Heart right ventricle (tissue), 16 donors: ENCODE measurements at regions of chr22 and their contacts with region 1.

Region 1: DNA sequence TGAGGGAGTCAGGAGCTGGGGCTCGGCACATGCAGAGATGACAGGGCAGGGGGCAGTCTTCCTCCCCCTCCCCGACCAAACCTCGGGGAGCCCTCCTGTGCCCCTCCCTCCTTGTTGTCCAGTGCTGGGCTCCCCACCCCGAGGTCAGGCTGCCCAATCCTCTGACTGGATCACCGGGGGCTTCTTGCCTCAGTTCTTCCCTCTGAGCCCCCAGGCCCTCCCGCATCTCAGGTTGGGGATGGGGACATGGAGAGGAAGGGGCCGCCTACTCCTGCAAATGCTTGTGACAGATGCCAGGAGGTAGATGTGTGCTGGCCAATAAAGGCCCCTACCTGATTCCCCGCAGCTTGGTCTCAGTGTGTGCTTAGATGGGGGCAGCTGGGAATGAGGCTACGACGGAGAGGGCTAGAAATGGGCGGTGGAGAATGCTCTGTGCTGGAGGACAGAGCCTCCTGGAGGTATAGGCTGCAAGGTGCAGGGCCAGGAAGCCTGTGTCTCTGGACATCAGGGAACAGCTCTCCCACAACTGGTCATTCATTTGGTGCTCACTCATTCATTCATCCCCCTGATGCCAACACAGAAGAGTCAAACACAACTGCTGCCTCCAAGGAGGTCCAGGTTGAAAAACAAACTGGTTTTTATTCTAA is 8.4 kb downstream of the RHBDD3 start:
- DNase-seq: no peak
- ATAC-seq: no peak
- H3K4me3 ChIP-seq: no peak overlapping the region
- H3K27ac ChIP-seq: no peak overlapping the region
- H3K4me1 ChIP-seq: no peaks in the 10 kb centered on the region
- H3K27me3 ChIP-seq: no peaks in the 10 kb centered on the region
- CTCF ChIP-seq: no peak

Region 2: GRCh38 chr22:28728621-28729313 is 530.6 kb before region 1 on chr22:
- intact Hi-C with region 1: loop called in 1 of 10 experiments (anchors 10 kb)
- DNase-seq: no peak
- ATAC-seq: no peak
- H3K4me3 ChIP-seq: no peak overlapping the region
- H3K27ac ChIP-seq: no peak overlapping the region
- H3K4me1 ChIP-seq: no peaks in the 10 kb centered on the region
- H3K27me3 ChIP-seq: no peaks in the 10 kb centered on the region
- CTCF ChIP-seq: no peak

Region 3: GRCh38 chr22:29055192-29055830 is 204.1 kb before region 1 on chr22:
- intact Hi-C with region 1: loop called in 1 of 10 experiments (anchors 10 kb)
- DNase-seq: no peak
- ATAC-seq: no peak
- H3K4me3 ChIP-seq: no peak overlapping the region
- H3K27ac ChIP-seq: no peak overlapping the region
- H3K4me1 ChIP-seq: no peaks in the 10 kb centered on the region
- H3K27me3 ChIP-seq: no peaks in the 10 kb centered on the region
- CTCF ChIP-seq: no peak

Region 4: DNA sequence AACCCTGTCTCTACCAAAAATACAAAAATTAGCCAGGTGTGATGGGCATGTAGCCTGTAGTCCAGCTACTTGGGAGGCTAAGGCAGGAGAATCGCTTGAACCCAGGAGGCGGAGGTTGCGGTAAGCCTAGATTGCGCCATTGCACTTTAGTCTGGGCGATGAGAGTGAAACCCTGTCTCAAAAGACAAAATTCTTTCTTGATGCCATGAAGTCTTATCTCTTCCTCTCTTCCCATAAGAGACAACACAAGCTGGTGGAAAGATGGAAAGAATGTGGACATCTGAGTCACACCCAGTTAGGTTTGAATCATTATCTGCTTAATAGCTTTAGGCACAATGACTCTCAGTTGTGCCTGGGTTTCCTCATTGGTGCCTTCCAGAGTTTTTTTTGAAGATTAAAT is 151.3 kb before region 1 on chr22:
- intact Hi-C with region 1: loop called in 1 of 10 experiments (anchors 10 kb)
- DNase-seq: no peak
- ATAC-seq: no peak
- H3K4me3 ChIP-seq: no peak overlapping the region
- H3K27ac ChIP-seq: no peak overlapping the region
- H3K4me1 ChIP-seq: peaks cover 0 to 10% (median 0%) of the 10 kb centered on the region in 9 donors
- H3K27me3 ChIP-seq: no peaks in the 10 kb centered on the region
- CTCF ChIP-seq: no peak

Region 5: GRCh38 chr22:29156524-29156923 is 102.9 kb before region 1 on chr22:
- intact Hi-C with region 1: no loop called
- DNase-seq: no peak
- ATAC-seq: no peak
- H3K4me3 ChIP-seq: no peak overlapping the region
- H3K27ac ChIP-seq: no peak overlapping the region
- H3K4me1 ChIP-seq: peaks cover 0 to 33% (median 15%) of the 10 kb centered on the region in 9 donors
- H3K27me3 ChIP-seq: peaks cover 0 to 6% (median 0%) of the 10 kb centered on the region in 7 donors
- CTCF ChIP-seq: peak in 1 of 9 donors; percentile 4